ENCODE measurements at regions of chr11 and their contacts with region 1.

Region 1: DNA sequence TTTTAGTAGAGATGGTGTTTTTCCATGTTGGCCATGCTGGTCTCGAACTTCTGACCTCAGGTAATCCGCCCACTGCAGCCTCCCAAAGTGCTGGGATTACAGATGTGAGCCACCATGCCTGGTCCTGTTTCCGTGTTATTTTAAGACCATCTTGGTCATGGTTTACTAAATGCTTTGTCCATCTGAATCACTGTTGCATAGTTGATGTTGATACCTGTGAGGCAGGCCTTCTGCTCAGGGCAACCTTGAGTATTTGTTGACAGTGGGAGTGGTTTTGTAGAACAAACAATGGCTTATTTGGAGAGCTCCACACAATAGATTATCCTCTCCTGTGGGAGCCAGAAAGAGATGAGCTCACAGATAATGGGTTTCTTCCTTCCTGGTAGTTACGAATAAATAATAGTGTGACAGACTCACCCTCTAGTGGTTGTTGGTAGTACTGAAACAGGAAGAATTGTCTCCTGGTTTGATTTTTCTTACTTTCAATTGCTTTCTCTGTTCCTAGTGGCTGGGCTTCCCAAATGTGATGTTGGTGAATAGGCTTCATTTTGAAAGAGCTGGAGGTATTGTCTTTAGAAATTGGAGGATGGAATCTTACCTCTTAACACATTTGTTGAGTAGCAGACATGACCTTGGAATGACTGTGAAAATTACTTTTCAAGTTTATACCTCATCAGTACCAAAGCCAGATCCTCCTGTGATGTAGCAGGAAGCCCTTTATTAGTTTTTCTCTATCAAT is 39.0 kb downstream of the CTNND1 start:
- DNase-seq: peak; percentile 79
- H3K27ac ChIP-seq: peak overlapping the region; percentile 64
- CTCF ChIP-seq: peak; percentile 84

Region 2: GRCh38 chr11:57713835-57714234 is 86.8 kb before region 1 on chr11:
- CTCF ChIA-PET with region 1: no interaction called
- POLR2A ChIA-PET with region 1: no interaction called
- DNase-seq: no peak
- H3K27ac ChIP-seq: no peak overlapping the region
- CTCF ChIP-seq: no peak

Region 3: GRCh38 chr11:57741132-57742086 is 59.2 kb before region 1 on chr11 and contains the start of gene SELENOH:
- CTCF ChIA-PET with region 1: interaction called, 14 read pairs
- POLR2A ChIA-PET with region 1: no interaction called
- DNase-seq: peak; percentile 95
- H3K27ac ChIP-seq: peak within 1 kb of the TSS; percentile 85
- CTCF ChIP-seq: no peak

Region 4: DNA sequence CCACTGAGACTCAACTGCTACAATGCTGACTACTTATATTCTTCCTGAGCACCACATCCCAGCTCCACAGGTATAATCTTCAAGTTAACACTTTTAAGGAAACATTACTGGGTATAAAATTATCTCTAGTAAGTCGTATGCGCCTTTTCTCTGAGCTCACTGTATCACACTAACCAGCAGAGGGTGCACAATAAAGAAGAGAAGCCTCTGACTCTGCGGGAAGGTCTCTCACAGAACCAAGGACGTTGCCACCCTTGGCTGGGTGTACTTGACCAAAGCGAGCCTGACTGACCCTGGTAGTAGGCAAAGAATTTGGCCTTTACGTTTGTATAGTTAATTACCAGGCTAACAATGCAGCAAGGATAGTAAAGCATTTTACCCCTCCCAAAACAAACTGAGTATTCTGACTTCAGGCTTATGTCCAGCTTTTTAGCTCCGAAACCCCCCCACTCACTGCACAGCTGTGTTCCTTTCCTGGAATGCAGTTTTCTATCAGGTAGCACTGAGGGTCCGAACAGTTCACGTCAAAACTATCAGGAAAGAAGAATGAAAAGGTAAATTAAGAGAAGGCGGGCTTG is 48.8 kb before region 1 on chr11 and contains the start of gene BTBD18:
- CTCF ChIA-PET with region 1: interaction called, 16 read pairs
- POLR2A ChIA-PET with region 1: no interaction called
- DNase-seq: no peak
- H3K27ac ChIP-seq: no peak within 1 kb of the TSS
- CTCF ChIP-seq: peak; percentile 39

Region 5: GRCh38 chr11:57761301-57762234 is 39.0 kb before region 1 on chr11 and contains the start of gene CTNND1:
- CTCF ChIA-PET with region 1: interaction called, 22 read pairs
- POLR2A ChIA-PET with region 1: interaction called, 3 read pairs
- DNase-seq: peak; percentile 100
- H3K27ac ChIP-seq: peak within 1 kb of the TSS; percentile 73
- CTCF ChIP-seq: no peak

Region 6: GRCh38 chr11:57885298-57886050 is 84.9 kb after region 1 on chr11:
- CTCF ChIA-PET with region 1: no interaction called
- POLR2A ChIA-PET with region 1: no interaction called
- DNase-seq: peak; percentile 25
- H3K27ac ChIP-seq: no peak overlapping the region
- CTCF ChIP-seq: no peak

Measured in RWPE1 (cell line).